CD4-positive, alpha-beta memory T cell (primary cell): ENCODE measurements at regions of chr5 and their contacts with region 1.

Region 1: GRCh38 chr5:93915142-93915553 is 173.7 kb upstream of the POU5F2 start:
- DNase-seq: peak in 4 of 5 donors; percentile 31 to 45 (median 38)
- H3K4me3 ChIP-seq: no peak overlapping the region
- H3K4me3 Mint-ChIP-seq: no peak overlapping the region
- H3K27ac ChIP-seq: no peak overlapping the region
- H3K27ac Mint-ChIP-seq: no peak overlapping the region
- H3K4me1 ChIP-seq: no peaks in the 10 kb centered on the region
- H3K4me1 Mint-ChIP-seq: peaks cover 0 to 1% (median 0%) of the 10 kb centered on the region in 4 donors
- H3K27me3 ChIP-seq: no peaks in the 10 kb centered on the region
- H3K27me3 Mint-ChIP-seq: no peaks in the 10 kb centered on the region

Region 2: DNA sequence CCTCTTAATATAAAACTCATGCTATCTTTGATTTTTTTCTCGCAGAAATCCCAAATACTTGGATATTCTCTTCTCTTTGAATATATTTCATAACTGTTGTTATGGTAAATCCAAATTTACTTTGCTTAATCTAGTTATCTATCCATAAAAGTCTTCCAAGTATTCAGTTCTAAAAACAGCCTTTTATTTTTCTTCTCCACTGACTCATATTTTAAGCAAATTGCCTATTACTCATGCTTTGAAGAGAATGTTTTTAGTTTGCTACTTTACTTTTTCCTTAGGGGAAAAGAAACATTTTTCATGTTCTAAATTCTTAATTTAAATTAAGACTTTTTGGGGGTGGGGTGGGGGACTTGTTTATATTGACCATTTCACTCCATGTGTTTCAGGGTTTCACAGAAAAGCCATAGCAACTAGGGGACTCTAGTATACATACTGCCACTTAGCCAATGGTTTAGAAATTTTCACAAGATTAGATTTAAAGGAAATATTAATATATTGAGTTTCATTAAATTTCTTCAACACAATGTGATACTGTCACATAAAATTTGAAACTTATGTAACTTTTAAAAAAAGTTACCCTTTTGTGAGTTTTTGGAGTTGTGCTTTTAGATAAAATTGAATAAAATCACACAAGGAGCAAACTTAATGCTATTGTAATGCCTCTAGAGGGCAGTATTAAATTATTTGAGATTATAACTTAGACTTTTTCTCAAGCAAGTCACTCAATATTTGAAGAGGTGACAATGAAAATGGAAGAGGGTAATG is 1986.2 kb before region 1 on chr5:
- CTCF ChIA-PET with region 1: no interaction called
- POLR2A ChIA-PET with region 1: no interaction called
- intact Hi-C with region 1: loop called (anchors 10 kb)
- DNase-seq: no peak
- H3K4me3 ChIP-seq: no peak overlapping the region
- H3K4me3 Mint-ChIP-seq: no peak overlapping the region
- H3K27ac ChIP-seq: no peak overlapping the region
- H3K27ac Mint-ChIP-seq: no peak overlapping the region
- H3K4me1 ChIP-seq: no peaks in the 10 kb centered on the region
- H3K4me1 Mint-ChIP-seq: no peaks in the 10 kb centered on the region
- H3K27me3 ChIP-seq: no peaks in the 10 kb centered on the region
- H3K27me3 Mint-ChIP-seq: no peaks in the 10 kb centered on the region

Region 3: DNA sequence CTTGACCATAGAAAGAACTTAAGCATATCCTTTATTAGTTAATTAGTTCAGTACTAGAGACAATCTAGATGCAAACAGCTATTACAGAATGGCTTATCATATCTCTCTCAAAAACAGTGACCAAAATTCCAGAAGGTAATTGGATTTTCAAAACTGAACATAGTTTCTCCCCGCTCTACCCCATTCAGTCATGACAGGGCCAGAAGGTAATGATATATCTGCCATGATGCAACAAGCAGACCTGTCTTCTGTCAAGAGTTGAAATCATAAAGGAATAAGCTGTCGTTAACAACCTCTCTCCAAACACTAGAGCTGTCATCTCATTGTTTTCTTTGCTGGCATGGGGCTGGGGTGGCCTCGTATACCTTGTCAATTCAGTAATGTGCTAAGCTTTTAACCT is 26.7 kb after region 1 on chr5:
- CTCF ChIA-PET with region 1: no interaction called
- POLR2A ChIA-PET with region 1: no interaction called
- intact Hi-C with region 1: no loop called
- DNase-seq: no peak
- H3K4me3 ChIP-seq: no peak overlapping the region
- H3K4me3 Mint-ChIP-seq: no peak overlapping the region
- H3K27ac ChIP-seq: no peak overlapping the region
- H3K27ac Mint-ChIP-seq: no peak overlapping the region
- H3K4me1 ChIP-seq: peaks cover 10% of the 10 kb centered on the region
- H3K4me1 Mint-ChIP-seq: peaks cover 11 to 15% (median 15%) of the 10 kb centered on the region in 4 donors
- H3K27me3 ChIP-seq: no peaks in the 10 kb centered on the region
- H3K27me3 Mint-ChIP-seq: no peaks in the 10 kb centered on the region